ENCODE measurements at regions of chr19 and their contacts with region 1.

Region 1: DNA sequence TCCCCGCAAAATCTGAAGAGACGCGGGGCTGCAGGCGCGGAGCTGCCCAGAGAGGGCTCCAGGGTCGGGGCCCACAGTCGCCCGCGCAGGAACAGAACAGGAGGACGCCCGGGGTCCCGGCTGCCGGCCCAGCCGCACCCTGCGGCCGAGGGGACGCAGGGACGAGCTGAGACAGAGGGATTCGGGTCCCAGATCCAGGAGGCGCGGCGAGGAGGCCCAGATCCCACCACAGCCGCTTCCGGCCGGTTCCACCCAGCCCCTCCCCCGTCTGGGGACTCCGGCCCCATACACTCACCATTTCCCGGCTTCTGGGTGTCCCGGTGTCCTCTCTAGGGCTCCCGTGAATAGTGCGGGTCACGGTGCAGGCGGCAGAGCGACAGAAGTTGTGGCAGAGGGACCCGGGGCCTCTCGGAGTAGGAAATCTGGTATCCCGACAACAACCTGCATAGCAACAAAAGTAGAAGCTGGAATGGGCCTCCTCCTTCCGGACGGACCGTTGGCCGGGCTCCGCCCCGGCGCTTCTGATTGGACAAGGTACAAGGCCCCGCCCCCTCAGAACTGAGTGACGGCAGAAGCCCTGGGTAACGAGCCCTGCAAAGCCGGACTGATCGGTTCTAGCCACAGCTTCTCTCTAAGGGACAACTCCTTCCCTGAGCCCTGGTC is at the start of gene ZNF20:
- DNase-seq: peak; percentile 97
- ATAC-seq: peak; percentile 99
- total RNA-seq, gene ZNF20: 1.8 TPM

Region 2: DNA sequence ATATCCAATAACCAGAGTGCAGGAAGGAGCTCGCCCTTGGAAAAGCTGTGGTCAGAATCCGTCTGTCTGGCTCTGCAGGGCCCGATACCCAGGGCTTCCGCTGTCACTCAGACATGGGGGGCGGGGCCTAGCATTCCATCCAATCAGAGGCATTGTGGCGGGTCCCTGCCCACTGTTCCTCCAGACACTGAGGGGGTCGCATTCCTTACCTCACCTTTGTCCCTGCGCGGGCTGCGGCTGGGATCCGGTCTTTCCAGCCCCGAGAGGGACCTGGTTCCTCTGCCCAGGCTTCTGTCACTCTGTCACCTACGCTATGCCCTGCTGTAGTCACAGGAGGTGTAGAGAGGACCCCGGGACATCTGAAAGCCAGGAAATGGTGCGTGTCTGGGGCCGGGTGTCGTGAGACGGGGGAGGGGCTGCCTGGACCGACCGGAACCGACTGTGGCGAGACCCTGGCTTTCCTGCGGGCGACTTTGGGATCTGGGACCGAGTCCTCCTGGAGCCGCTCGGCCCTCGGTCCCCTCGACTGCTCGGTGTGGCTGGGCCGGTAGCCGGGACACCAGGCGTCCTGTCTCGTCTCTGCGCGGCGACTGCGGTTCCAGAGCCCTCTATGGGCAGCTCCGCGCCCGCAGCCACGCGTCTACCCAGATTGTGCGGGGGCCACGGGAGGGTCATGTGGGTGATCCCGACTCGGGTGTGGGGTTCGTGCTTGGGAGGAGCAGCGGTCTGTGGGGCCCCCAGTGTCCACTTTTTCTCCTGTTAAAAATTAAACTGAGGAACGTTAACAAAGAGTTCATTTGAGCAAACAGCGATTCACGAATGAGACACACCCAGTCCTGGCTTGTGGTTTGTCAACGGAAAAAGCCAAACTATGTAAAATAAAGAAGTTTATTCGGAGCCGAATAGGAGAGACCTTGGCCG is 252.1 kb before region 1 on chr19 and contains the start of gene ZNF69:
- intact Hi-C with region 1: loop called (anchors 10 kb)
- DNase-seq: peak; percentile 93
- ATAC-seq: peak; percentile 100
- total RNA-seq, gene ZNF69: 4.0 TPM

Region 3: DNA sequence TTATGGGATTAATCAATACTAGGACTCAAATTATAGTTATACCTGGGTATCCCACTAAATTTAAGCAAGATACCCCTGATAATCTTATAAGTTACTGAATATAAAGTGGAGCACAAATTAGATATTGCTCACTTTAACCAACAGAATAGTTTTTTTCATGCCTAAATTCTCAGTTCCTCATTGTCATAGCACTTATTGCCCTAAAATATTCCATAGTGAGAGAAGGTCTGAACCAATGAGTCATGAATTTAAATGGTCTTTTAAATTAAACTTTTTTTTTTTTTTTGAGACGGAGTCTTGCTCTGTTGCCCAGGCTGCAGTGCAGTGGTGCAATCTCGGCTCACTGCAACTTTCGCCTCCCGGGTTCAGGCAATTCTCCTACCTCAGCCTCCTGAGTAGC is 65.3 kb after region 1 on chr19:
- intact Hi-C with region 1: no loop called
- DNase-seq: no peak
- ATAC-seq: no peak